Activated CD8-positive, alpha-beta T cell treated with anti-CD3 and anti-CD28 coated beads for 36 hours (primary cell): ENCODE measurements at regions of chr16 and their contacts with region 1.

Region 1: DNA sequence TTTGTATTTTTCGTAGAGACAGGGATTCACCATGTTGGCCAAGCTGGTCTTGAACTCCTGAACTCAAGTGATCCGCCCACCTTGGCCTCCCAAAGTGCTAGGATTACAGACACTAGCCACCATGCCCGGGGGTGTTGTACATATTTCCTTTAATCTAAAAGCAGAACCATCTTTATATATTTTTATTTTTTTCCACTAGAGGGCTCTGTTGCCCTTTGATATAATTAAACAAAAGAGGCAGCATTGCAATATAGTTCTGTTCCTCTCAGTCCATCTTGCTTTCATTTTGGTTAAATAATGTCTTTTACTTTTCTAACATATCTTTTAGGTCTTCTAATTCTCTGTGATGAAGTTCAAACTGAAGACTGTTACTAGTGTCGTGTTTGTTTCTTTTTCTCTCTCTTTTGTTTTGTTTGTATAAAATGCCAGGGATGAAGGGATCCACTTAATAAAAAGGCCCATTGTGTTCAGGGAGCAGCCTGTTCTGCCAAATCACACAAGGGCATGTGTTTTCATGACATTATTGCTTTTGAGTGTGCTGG is 23.4 kb downstream of the WWOX start:
- DNase-seq: peak; percentile 44
- ATAC-seq: peak; percentile 74
- H3K4me3 Mint-ChIP-seq: no peak overlapping the region
- H3K27ac Mint-ChIP-seq: no peak overlapping the region
- H3K4me1 Mint-ChIP-seq: peaks cover 2% of the 10 kb centered on the region
- H3K27me3 Mint-ChIP-seq: no peaks in the 10 kb centered on the region
- CTCF ChIP-seq: peak; percentile 73

Region 2: GRCh38 chr16:78235168-78235800 is 112.4 kb after region 1 on chr16:
- CTCF ChIA-PET with region 1: interaction called, 11 read pairs
- POLR2A ChIA-PET with region 1: no interaction called
- intact Hi-C with region 1: loop called (anchors 1 kb)
- DNase-seq: peak; percentile 76
- ATAC-seq: peak; percentile 90
- H3K4me3 Mint-ChIP-seq: no peak overlapping the region
- H3K27ac Mint-ChIP-seq: no peak overlapping the region
- H3K4me1 Mint-ChIP-seq: peaks cover 2% of the 10 kb centered on the region
- H3K27me3 Mint-ChIP-seq: no peaks in the 10 kb centered on the region
- CTCF ChIP-seq: peak; percentile 89